ENCODE measurements at regions of chr2 and their contacts with region 1.

Region 1: DNA sequence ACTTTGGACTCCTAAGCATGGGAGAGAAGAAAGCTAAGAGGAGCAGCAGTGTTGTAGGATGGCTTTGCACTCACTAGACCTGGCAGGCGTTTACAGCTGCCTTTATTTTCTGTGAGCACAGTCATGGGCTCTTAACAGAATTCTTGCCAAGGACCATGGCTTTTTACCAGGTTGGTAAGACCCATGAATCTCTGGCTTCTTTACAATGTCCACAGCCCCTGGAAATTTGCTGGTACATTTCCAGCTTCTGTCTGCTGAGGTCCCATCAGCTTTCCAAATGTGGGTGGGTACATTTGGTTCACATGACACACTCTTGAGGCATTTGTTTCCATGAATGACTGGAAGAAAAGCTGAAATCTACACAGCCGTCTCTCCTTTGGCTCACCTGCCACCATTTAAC is 162.7 kb downstream of the PPP1R1C start:
- DNase-seq: no peak
- H3K4me3 ChIP-seq: no peak overlapping the region
- H3K27ac ChIP-seq: no peak overlapping the region
- H3K4me1 ChIP-seq: no peaks in the 10 kb centered on the region
- H3K27me3 ChIP-seq: no peaks in the 10 kb centered on the region
- CTCF ChIP-seq: no peak
- EP300 ChIP-seq: no peak
- POLR2A ChIP-seq: no peak

Region 2: GRCh38 chr2:181305301-181306123 is 842.8 kb before region 1 on chr2:
- in situ Hi-C with region 1: no loop called
- intact Hi-C with region 1: loop called (anchors 5 kb)
- DNase-seq: peak; percentile 51
- H3K4me3 ChIP-seq: no peak overlapping the region
- H3K27ac ChIP-seq: peak overlapping the region; percentile 49 to 63 (median 58)
- H3K4me1 ChIP-seq: peaks cover 0 to 13% (median 2%) of the 10 kb centered on the region in 4 donors
- H3K27me3 ChIP-seq: no peaks in the 10 kb centered on the region
- CTCF ChIP-seq: no peak
- EP300 ChIP-seq: no peak
- POLR2A ChIP-seq: peak; percentile 18

Region 3: GRCh38 chr2:181959508-181959907 is 188.8 kb before region 1 on chr2:
- in situ Hi-C with region 1: no loop called
- intact Hi-C with region 1: no loop called
- DNase-seq: no peak
- H3K4me3 ChIP-seq: no peak overlapping the region
- H3K27ac ChIP-seq: no peak overlapping the region
- H3K4me1 ChIP-seq: peaks cover 2 to 4% (median 3%) of the 10 kb centered on the region in 4 donors
- H3K27me3 ChIP-seq: no peaks in the 10 kb centered on the region
- CTCF ChIP-seq: no peak
- EP300 ChIP-seq: no peak
- POLR2A ChIP-seq: no peak

Measured in transverse colon (tissue), 4 donors.